Activated B cell treated with CpG ODN at 0.5 μM for 24 hours (primary cell): ENCODE measurements at regions of chr2 and their contacts with region 1.

Region 1: GRCh38 chr2:100394111-100394641 is 23.3 kb downstream of the CHST10 start:
- DNase-seq: peak; percentile 63
- ATAC-seq: peak; percentile 77
- H3K4me3 Mint-ChIP-seq: peak overlapping the region; percentile 80
- H3K27ac Mint-ChIP-seq: peak overlapping the region; percentile 97
- H3K4me1 Mint-ChIP-seq: peaks cover 43% of the 10 kb centered on the region
- H3K27me3 Mint-ChIP-seq: no peaks in the 10 kb centered on the region
- CTCF ChIP-seq: no peak

Region 2: DNA sequence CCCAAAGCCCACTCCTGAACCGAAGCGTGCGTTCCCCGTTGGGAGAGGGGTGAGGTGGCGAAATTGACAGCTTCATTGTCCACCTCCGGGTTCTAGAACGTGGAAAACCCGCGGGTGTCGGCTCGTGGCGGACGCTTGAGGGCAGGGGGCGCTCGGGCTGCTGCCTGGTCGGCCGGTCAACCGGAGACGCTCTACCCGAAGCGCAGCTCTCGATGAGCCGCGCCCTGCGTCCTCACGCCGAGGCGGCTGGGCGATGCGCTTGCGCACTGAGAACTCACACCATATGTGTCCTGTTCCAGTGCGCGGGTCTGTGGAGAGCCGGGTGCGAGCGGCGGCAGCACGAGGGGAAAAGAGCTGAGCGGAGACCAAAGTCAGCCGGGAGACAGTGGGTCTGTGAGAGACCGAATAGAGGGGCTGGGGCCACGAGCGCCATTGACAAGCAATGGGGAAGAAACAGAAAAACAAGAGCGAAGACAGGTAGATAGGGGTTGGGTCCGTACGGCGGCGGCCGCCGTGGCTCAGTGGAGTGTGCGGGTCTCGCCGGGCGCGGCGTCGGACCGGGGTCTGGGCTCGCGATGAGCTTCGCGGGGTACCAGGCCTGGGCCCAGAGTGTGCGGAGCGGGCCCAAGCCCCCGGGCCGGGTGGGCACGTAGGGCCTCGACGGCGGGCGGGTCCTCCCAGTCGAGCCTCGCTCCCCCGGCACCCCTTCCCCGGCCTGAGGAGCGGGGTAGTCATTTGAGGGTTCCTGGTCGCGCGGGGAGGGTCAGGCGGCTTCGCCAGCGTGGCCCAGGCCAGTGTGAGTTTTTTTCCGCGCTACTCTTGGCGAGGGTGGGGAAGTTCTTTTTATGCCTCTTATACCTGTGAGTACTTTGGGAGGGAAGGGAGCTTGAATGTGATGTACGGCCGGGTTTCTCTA is 1056.8 kb before region 1 on chr2 and contains the start of gene EIF5B:
- CTCF ChIA-PET with region 1: no interaction called
- POLR2A ChIA-PET with region 1: no interaction called
- intact Hi-C with region 1: loop called (anchors 2 kb)
- DNase-seq: peak; percentile 92
- ATAC-seq: peak; percentile 69
- H3K4me3 Mint-ChIP-seq: no peak within 1 kb of the TSS
- H3K27ac Mint-ChIP-seq: no peak within 1 kb of the TSS
- H3K4me1 Mint-ChIP-seq: peaks cover 28% of the 10 kb centered on the region
- H3K27me3 Mint-ChIP-seq: no peaks in the 10 kb centered on the region
- CTCF ChIP-seq: no peak
- total RNA-seq, gene EIF5B: 52.3 and 55.0 TPM in 2 replicates

Region 3: GRCh38 chr2:100235098-100235497 is 159.1 kb before region 1 on chr2:
- CTCF ChIA-PET with region 1: no interaction called
- POLR2A ChIA-PET with region 1: interaction called, 4 read pairs
- intact Hi-C with region 1: loop called (anchors 1 kb)
- DNase-seq: peak; percentile 67
- ATAC-seq: peak; percentile 93
- H3K4me3 Mint-ChIP-seq: peak overlapping the region; percentile 58
- H3K27ac Mint-ChIP-seq: peak overlapping the region; percentile 86
- H3K4me1 Mint-ChIP-seq: peaks cover 76% of the 10 kb centered on the region
- H3K27me3 Mint-ChIP-seq: no peaks in the 10 kb centered on the region
- CTCF ChIP-seq: no peak

Region 4: GRCh38 chr2:100302585-100302892 is 91.6 kb before region 1 on chr2:
- CTCF ChIA-PET with region 1: no interaction called
- POLR2A ChIA-PET with region 1: no interaction called
- intact Hi-C with region 1: no loop called
- DNase-seq: no peak
- ATAC-seq: no peak
- H3K4me3 Mint-ChIP-seq: no peak overlapping the region
- H3K27ac Mint-ChIP-seq: no peak overlapping the region
- H3K4me1 Mint-ChIP-seq: no peaks in the 10 kb centered on the region
- H3K27me3 Mint-ChIP-seq: peaks cover 14% of the 10 kb centered on the region
- CTCF ChIP-seq: no peak

Region 5: DNA sequence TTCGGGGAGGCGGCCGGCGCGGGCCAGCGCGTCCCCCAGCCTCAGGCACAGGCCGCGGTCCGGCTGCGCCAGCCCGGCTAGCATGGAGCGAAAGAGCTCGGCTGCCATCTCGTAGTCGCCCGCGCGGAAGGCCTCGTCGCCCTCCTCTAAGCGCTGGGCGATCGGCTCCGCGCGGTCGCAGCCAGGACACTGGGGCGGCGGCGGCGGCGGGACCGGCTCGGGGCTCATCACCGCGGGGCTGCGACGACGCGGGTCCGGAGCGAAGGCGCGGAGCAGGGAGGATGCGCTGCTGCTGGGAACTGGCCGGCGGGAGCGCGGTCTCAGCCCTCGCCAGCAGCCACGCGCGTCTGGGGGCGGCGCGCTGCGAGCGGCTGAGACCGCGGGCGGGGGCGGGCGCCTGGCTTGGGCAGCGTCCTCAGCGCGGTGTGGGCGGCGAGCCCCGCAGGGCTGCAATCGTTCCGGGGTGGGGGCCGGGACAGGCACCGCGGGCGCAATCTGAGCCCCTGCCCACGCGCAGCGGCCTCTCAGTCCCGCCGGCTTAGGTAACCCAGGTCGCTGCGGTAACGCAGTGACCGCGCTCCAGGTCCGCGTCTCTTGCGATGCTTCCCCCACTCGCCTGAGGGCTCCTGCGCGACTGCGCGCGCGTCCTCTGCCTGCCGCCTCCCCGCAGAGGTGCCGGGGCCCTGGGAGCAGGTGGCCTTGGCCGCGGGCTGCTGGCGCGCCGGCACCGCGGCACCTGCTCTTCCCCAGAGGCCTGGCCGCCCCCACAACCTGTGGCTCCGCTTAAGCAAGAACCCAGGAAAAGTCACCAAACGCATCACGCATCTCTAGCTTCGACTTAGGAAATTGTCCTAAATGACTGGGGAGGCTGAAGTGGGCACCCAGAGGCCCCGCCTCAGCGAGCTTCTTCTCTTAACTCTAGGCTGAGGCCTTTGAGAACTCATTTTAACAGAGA is 72.0 kb before region 1 on chr2 and contains the start of gene LONRF2:
- CTCF ChIA-PET with region 1: no interaction called
- POLR2A ChIA-PET with region 1: no interaction called
- intact Hi-C with region 1: loop called (anchors 2 kb)
- DNase-seq: peak; percentile 31
- ATAC-seq: peak; percentile 59
- H3K4me3 Mint-ChIP-seq: peak within 1 kb of the TSS; percentile 72
- H3K27ac Mint-ChIP-seq: no peak within 1 kb of the TSS
- H3K4me1 Mint-ChIP-seq: peaks cover 2% of the 10 kb centered on the region
- H3K27me3 Mint-ChIP-seq: peaks cover 51% of the 10 kb centered on the region
- CTCF ChIP-seq: no peak
- total RNA-seq, gene LONRF2: 0.09 and 0.17 TPM in 2 replicates

Region 6: DNA sequence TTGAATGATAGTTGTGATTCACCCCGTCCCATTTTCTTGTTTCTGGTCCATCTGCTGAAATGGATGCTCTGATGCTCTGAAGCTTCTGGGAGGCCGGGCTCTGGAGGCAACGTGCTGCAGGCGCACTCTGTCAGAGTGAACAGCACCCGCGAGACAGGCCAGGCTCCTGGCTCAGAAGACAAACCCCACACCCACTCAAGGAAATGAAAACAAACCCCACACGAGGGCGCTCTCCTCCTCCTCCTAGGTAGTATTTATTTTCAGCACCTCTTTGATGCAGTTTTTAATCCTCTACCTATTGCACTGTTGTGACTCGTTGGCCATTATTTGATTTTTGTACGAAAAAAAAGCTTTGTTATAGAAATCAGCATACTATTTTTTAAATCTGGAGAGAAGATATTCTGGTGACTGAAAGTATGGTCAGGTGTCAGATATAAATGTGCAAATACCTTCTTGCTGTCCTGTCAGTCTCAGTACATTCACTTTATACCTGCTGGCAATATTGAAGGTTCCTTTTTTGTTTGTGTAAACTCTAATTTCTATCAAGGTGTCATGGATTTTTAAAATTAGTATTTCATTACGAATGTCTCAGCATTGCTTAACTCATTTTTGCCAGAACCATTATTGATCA is 33.6 kb after region 1 on chr2:
- CTCF ChIA-PET with region 1: no interaction called
- POLR2A ChIA-PET with region 1: no interaction called
- intact Hi-C with region 1: loop called (anchors 2 kb)
- DNase-seq: peak; percentile 43
- ATAC-seq: peak; percentile 68
- H3K4me3 Mint-ChIP-seq: no peak overlapping the region
- H3K27ac Mint-ChIP-seq: no peak overlapping the region
- H3K4me1 Mint-ChIP-seq: peaks cover 3% of the 10 kb centered on the region
- H3K27me3 Mint-ChIP-seq: peaks cover 10% of the 10 kb centered on the region
- CTCF ChIP-seq: no peak

Region 7: DNA sequence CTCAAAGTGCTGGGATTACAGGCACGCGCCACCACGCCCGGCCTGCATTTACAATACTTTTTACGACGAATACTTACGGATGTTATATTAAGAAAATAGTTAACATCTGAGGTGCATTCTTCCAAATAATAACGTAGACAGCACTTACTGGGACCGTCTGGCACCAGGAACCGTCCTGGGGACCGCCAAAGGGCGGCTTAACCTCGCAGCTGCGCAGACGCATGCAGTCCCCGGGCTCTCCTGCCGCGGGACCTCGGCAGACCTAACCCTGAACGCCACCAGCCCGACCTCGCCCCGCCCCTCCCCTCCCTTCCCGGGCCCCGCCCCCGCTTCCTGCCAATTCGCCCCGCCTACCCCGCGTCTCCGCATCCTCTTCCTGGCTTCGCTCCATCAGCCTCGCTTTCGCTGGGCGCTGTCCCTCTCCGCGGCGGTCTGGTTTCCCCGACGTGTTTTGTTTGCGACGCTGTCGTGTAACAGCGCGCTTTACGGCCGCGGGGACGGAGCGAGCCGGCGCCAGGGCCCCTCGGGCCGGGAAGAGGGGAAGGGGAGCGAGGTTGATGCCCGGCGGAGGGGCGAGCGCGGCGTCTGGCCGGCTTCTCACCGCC is 858.3 kb after region 1 on chr2 and contains the start of gene CNOT11:
- CTCF ChIA-PET with region 1: no interaction called
- POLR2A ChIA-PET with region 1: no interaction called
- intact Hi-C with region 1: loop called (anchors 5 kb)
- DNase-seq: peak; percentile 98
- ATAC-seq: peak; percentile 86
- H3K4me3 Mint-ChIP-seq: peak within 1 kb of the TSS; percentile 91
- H3K27ac Mint-ChIP-seq: peak within 1 kb of the TSS; percentile 94
- H3K4me1 Mint-ChIP-seq: peaks cover 41% of the 10 kb centered on the region
- H3K27me3 Mint-ChIP-seq: no peaks in the 10 kb centered on the region
- CTCF ChIP-seq: no peak
- total RNA-seq, gene CNOT11: 50.8 and 59.7 TPM in 2 replicates